ENCODE measurements at regions of chr4 and their contacts with region 1.

Region 1: DNA sequence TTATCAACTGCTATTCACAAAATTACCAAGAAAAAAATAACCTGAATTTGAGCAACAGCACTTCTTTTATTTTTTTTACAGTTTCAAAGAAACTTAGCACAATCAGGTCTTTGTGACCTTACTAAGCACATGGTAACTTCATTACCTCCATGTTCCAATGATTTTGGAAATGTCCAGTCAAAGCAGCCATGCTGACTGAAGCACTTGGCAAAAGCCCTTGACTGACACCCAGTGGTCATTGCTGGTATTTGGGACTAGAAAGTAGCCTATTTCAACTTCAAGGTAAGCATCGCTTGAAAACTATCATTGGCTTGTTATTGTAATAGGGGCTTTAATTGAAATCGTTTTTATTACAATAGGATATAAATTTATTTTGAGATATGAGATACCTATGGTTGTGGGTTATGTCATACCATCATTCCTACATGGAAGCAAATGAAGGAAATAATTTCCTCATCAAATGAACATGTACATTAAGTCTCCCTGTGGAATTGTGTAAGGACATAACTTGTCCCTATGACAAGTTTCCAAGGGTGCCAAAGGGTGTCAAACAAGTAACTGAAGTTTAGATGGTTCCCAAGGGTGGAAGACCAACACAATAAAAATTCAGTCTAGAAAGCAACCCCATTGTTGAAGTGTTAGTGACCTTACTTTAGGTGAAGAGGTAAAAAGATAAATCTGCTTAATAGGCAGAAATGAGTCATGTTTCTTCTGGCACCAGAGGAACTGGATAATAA is 15.2 kb upstream of the ANXA10 start:
- DNase-seq: peak; percentile 59
- H3K4me3 ChIP-seq: no peak overlapping the region
- H3K27ac ChIP-seq: no peak overlapping the region
- H3K4me1 ChIP-seq: no peaks in the 10 kb centered on the region
- H3K27me3 ChIP-seq: no peaks in the 10 kb centered on the region
- CTCF ChIP-seq: peak; percentile 97 to 99

Region 2: GRCh38 chr4:167290678-167291077 is 786.5 kb before region 1 on chr4:
- CTCF ChIA-PET with region 1: no interaction called
- dilution Hi-C with region 1: no loop called
- in situ Hi-C with region 1: no loop called
- intact Hi-C with region 1: loop called (anchors 10 kb)
- DNase-seq: peak; percentile 1
- H3K4me3 ChIP-seq: no peak overlapping the region
- H3K27ac ChIP-seq: no peak overlapping the region
- H3K4me1 ChIP-seq: no peaks in the 10 kb centered on the region
- H3K27me3 ChIP-seq: no peaks in the 10 kb centered on the region
- CTCF ChIP-seq: peak; percentile 27 to 50

Region 3: DNA sequence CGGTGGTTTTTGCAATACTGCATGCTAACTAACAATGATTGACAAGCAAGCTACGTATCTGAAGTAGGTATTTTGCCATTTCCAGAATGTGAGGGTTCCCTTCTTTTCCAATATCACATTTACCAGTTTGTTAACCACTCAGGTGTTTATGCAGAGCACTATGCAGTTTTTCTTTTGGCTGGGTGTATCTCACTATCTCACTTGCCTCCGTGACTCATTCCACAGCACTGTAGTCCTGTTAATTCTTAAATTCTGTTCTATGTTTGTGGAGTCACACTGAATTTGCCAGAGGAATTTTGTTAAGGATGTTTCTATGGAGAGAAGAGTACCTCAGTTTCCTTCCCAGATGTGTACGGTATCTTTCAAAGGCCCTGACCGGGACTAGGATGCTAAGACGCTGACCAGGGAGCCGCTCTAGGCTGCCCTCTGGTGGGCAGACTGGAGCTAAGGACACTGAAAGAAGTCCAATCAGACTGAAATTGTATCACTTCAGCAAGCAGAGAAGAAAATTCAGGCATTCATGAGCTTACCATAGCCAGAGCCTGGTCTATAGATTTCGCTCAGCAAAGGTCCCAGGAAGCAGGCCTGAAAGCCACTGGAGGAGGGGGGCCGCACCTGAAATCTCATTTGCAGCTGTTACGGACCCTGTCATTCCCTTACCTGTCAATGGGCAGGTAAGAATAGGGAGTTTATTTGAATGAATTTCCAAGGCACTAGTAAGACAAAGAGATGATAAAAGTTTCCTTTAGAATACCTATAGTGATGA is 454.5 kb before region 1 on chr4:
- CTCF ChIA-PET with region 1: no interaction called
- dilution Hi-C with region 1: no loop called
- in situ Hi-C with region 1: no loop called
- intact Hi-C with region 1: loop called (anchors 2 kb)
- DNase-seq: peak; percentile 34
- H3K4me3 ChIP-seq: no peak overlapping the region
- H3K27ac ChIP-seq: no peak overlapping the region
- H3K4me1 ChIP-seq: no peaks in the 10 kb centered on the region
- H3K27me3 ChIP-seq: no peaks in the 10 kb centered on the region
- CTCF ChIP-seq: peak; percentile 83 to 95

Region 4: DNA sequence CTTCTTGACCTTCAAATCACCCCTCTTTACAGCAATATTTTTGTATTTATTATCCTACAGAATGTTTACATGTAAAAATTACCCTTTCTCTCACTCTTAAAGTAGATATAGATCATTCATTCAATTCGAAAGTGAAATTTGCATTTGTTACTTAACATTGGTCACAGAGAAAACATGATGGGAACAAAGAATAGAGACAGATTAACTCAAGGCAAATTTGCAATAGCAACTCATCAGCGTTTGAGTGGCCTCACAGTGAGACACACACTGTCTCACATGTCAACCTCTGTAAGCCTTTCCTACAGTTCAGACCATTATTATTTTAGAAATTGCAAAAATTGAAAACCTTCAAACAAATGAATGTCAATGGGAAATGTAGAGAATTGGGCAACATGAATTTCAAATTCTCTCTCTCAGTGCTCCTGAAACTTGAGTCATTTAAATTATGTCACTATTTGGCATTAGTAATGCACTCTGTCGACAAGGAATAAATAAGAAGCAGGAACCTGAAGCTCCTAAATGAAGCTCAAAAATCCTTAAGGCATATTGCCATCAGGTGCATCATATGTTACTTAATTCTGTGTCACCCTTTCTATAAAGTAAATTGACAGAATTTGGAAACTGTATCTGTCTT is 133.2 kb before region 1 on chr4:
- CTCF ChIA-PET with region 1: no interaction called
- dilution Hi-C with region 1: no loop called
- in situ Hi-C with region 1: no loop called
- intact Hi-C with region 1: no loop called
- DNase-seq: peak; percentile 10
- H3K4me3 ChIP-seq: no peak overlapping the region
- H3K27ac ChIP-seq: no peak overlapping the region
- H3K4me1 ChIP-seq: no peaks in the 10 kb centered on the region
- H3K27me3 ChIP-seq: no peaks in the 10 kb centered on the region
- CTCF ChIP-seq: no peak

Region 5: GRCh38 chr4:168028568-168028967 is 48.6 kb before region 1 on chr4:
- CTCF ChIA-PET with region 1: no interaction called
- dilution Hi-C with region 1: no loop called
- in situ Hi-C with region 1: no loop called
- intact Hi-C with region 1: loop called (anchors 1 kb)
- DNase-seq: peak; percentile 35
- H3K4me3 ChIP-seq: no peak overlapping the region
- H3K27ac ChIP-seq: no peak overlapping the region
- H3K4me1 ChIP-seq: no peaks in the 10 kb centered on the region
- H3K27me3 ChIP-seq: no peaks in the 10 kb centered on the region
- CTCF ChIP-seq: peak; percentile 28 to 52

Region 6: GRCh38 chr4:168241953-168242352 is 164.8 kb after region 1 on chr4:
- CTCF ChIA-PET with region 1: no interaction called
- dilution Hi-C with region 1: no loop called
- in situ Hi-C with region 1: no loop called
- intact Hi-C with region 1: no loop called
- DNase-seq: no peak
- H3K4me3 ChIP-seq: no peak overlapping the region
- H3K27ac ChIP-seq: no peak overlapping the region
- H3K4me1 ChIP-seq: no peaks in the 10 kb centered on the region
- H3K27me3 ChIP-seq: no peaks in the 10 kb centered on the region
- CTCF ChIP-seq: no peak

Measured in mammary epithelial cell (primary cell).